Endothelial cell of umbilical vein (primary cell): ENCODE measurements at regions of chr17 and their contacts with region 1.

Region 1: GRCh38 chr17:28133562-28133970 is 91.1 kb downstream of the NLK start:
- DNase-seq: peak; percentile 90
- H3K4me3 ChIP-seq: no peak overlapping the region
- H3K27ac ChIP-seq: peak overlapping the region; percentile 74
- H3K4me1 ChIP-seq: peaks cover 38% of the 10 kb centered on the region
- H3K27me3 ChIP-seq: no peaks in the 10 kb centered on the region
- CTCF ChIP-seq: no peak
- POLR2A ChIP-seq: no peak

Region 2: DNA sequence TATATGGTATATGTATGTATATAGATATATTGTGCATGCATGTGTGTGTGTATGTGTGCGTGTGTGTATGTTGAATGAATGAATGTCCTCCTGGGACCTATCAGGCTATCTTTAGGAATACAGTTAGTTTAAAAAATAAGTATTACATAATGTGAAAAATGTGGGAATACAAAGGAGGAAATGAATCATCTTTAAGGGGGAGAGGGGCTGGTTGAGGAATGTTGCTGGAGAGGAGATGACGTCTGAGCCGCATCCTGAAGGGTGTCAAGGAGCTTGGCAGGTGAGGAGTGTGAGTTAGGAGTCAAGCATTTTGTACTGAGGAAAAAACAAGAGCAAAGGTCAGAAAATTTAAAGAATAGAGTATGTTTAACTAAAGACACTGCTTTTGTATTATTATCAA is 153.5 kb before region 1 on chr17:
- CTCF ChIA-PET with region 1: interaction called, 5 read pairs
- POLR2A ChIA-PET with region 1: interaction called, 4 read pairs
- dilution Hi-C with region 1: no loop called
- intact Hi-C with region 1: loop called (anchors 1 kb)
- DNase-seq: peak; percentile 99
- H3K4me3 ChIP-seq: no peak overlapping the region
- H3K27ac ChIP-seq: peak overlapping the region; percentile 91
- H3K4me1 ChIP-seq: peaks cover 52% of the 10 kb centered on the region
- H3K27me3 ChIP-seq: no peaks in the 10 kb centered on the region
- CTCF ChIP-seq: no peak
- POLR2A ChIP-seq: peak; percentile 47

Region 3: DNA sequence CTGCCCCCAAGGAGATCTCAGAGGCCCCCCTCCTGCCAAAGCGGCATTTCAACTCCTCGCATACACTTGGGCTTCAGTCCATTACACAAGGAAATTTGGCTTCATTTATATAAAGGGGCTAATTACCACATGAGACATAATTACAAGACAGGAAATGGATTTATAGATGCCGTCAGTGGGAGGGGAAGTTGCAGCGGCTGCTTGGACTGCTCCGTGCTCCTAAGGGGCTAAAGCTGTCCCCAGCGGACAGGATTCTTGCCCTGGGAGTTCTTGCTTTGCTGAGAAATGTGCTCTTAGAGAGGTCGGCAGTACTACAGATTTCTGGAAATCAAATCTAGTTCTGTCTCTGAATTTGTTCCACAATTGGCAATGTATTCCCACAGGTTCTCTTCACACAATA is 148.3 kb before region 1 on chr17:
- CTCF ChIA-PET with region 1: interaction called, 5 read pairs
- POLR2A ChIA-PET with region 1: interaction called, 4 read pairs
- dilution Hi-C with region 1: no loop called
- intact Hi-C with region 1: loop called (anchors 1 kb)
- DNase-seq: peak; percentile 72
- H3K4me3 ChIP-seq: no peak overlapping the region
- H3K27ac ChIP-seq: peak overlapping the region; percentile 49
- H3K4me1 ChIP-seq: peaks cover 69% of the 10 kb centered on the region
- H3K27me3 ChIP-seq: no peaks in the 10 kb centered on the region
- CTCF ChIP-seq: no peak
- POLR2A ChIP-seq: no peak

Region 4: DNA sequence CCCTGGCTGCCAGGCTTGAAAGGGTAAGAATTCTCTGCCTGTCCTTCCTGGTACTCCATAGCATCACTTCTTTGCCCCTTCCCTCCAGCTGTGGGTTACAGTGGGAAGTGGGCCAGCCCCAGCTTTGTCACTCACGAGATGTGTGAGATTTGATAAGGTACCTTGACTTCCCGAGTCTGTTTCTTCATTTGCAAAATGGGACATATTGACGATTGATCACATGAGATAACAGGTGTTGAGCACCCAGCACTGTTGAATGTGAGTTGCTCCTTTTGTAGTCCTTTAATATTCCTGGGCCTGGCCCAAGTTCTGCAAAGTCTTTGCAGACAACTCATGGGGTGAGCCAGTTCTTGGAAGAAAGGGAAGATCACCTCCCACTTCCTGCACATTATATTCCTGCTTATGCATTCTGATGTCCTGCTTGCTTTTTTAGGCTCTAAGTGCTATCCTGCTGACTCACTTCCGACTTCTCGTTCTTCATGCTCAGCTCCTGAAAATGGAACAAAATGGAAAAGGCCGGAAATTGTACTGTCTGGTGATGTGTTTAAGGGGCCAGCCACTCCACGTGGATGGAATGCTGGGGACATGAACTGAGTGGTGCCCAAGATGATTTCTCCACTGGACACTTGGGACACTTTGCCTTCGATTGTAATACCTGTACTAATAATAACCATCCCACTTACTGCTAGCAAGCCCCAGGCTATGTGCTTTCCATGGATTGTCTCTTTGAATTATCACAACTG is 99.4 kb before region 1 on chr17:
- CTCF ChIA-PET with region 1: no interaction called
- POLR2A ChIA-PET with region 1: no interaction called
- dilution Hi-C with region 1: no loop called
- intact Hi-C with region 1: loop called (anchors 1 kb)
- DNase-seq: peak; percentile 80
- H3K4me3 ChIP-seq: no peak overlapping the region
- H3K27ac ChIP-seq: peak overlapping the region; percentile 82
- H3K4me1 ChIP-seq: peaks cover 21% of the 10 kb centered on the region
- H3K27me3 ChIP-seq: no peaks in the 10 kb centered on the region
- CTCF ChIP-seq: no peak
- POLR2A ChIP-seq: no peak

Region 5: DNA sequence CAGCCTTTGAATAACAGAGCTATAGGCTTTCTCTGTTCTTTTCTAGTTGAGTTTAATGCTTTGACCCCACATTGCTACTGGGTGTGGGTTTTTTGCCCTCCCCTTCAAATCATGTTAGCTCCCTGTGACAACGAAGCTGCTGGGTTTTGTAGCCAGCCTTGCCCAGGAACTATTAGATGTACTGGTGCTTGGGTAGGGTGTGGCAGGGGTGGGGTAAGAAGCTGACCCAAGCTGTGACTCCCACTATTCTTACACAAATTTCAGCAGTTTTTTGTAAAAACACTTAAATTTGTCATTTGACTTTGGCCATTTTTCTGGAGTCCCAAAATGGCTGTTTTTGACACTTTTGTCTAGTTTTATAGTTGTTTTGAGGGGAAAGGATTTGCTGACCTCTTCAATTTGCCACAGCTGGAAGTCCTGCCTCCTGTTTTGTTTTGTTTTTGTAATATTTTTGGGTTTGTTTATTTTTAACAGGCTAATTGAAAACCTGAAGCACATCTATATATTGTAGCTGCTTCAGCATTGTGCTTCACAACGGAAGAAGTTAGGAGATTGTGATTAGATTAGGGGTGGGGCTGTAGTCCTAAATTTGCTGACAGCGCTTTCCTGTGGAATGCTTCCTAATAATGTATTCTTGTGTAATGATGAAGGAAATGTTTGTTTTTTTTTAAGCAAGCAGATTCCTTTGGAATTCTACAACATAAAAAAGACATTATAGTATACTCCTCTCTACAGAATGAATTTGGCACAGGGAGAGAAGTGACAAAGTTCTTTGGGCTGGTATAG is 21.2 kb before region 1 on chr17:
- CTCF ChIA-PET with region 1: interaction called, 7 read pairs
- POLR2A ChIA-PET with region 1: no interaction called
- dilution Hi-C with region 1: no loop called
- intact Hi-C with region 1: loop called (anchors 2 kb)
- DNase-seq: peak; percentile 62
- H3K4me3 ChIP-seq: no peak overlapping the region
- H3K27ac ChIP-seq: peak overlapping the region; percentile 13
- H3K4me1 ChIP-seq: peaks cover 21% of the 10 kb centered on the region
- H3K27me3 ChIP-seq: no peaks in the 10 kb centered on the region
- CTCF ChIP-seq: no peak
- POLR2A ChIP-seq: no peak

Region 6: GRCh38 chr17:28145348-28145747 is 11.8 kb after region 1 on chr17:
- CTCF ChIA-PET with region 1: interaction called, 13 read pairs
- POLR2A ChIA-PET with region 1: no interaction called
- dilution Hi-C with region 1: no loop called
- intact Hi-C with region 1: no loop called
- DNase-seq: no peak
- H3K4me3 ChIP-seq: no peak overlapping the region
- H3K27ac ChIP-seq: no peak overlapping the region
- H3K4me1 ChIP-seq: peaks cover 9% of the 10 kb centered on the region
- H3K27me3 ChIP-seq: no peaks in the 10 kb centered on the region
- CTCF ChIP-seq: no peak
- POLR2A ChIP-seq: no peak

Region 7: DNA sequence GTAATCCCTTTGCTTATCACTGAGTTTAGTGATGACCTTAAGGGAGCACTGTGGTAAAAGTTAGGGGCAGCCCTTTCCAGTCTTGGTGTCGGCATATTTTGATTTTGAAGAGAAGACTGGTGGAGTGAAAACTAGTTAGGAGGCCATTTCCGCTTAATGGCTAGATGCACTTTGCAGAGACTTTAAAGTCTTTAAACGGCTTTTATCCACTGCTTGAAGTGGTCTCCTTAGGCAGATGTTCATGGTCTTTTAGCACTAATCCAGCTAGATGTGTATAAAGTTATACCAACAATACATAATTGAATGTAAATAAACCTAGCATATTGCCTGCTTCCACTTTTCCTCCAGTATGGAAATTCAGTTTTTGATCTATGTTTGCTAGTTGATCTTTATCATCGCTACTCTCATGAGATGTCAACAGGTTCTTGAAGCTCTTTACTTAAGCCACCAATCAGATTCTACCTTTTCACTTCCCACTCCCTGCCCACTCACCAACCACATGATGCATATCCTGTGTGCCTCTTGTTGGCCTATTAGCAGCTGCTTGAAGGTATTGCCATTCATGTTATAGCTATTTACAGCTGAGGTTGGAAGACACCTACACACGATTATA is 40.9 kb after region 1 on chr17:
- CTCF ChIA-PET with region 1: interaction called, 3 read pairs
- POLR2A ChIA-PET with region 1: interaction called, 3 read pairs
- dilution Hi-C with region 1: no loop called
- intact Hi-C with region 1: loop called (anchors 1 kb)
- DNase-seq: peak; percentile 29
- H3K4me3 ChIP-seq: no peak overlapping the region
- H3K27ac ChIP-seq: peak overlapping the region; percentile 79
- H3K4me1 ChIP-seq: peaks cover 45% of the 10 kb centered on the region
- H3K27me3 ChIP-seq: no peaks in the 10 kb centered on the region
- CTCF ChIP-seq: no peak
- POLR2A ChIP-seq: no peak

Region 8: DNA sequence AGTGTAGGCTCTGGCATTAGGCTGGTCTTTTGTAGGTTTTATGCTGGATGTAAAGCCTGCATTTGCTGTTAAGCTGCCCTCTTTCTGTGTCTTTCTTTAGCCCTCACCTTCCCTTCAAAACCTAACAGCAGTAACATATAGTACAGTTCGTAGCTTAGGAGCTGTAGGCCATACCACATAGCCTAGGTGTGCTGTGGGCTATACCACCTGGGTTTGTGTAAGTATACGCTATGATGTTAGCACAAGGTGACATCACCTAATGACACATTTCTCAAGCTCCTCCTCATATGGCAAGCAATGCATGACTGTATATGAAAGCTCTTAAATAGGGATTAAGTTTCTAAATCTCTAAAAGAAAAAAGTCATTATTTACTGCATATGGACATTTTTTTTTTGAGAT is 127.6 kb after region 1 on chr17:
- CTCF ChIA-PET with region 1: no interaction called
- POLR2A ChIA-PET with region 1: no interaction called
- dilution Hi-C with region 1: no loop called
- intact Hi-C with region 1: no loop called
- DNase-seq: no peak
- H3K4me3 ChIP-seq: no peak overlapping the region
- H3K27ac ChIP-seq: no peak overlapping the region
- H3K4me1 ChIP-seq: no peaks in the 10 kb centered on the region
- H3K27me3 ChIP-seq: no peaks in the 10 kb centered on the region
- CTCF ChIP-seq: no peak
- POLR2A ChIP-seq: no peak